K562 (cell line): ENCODE measurements at regions of chr14 and their contacts with region 1.

Region 1: DNA sequence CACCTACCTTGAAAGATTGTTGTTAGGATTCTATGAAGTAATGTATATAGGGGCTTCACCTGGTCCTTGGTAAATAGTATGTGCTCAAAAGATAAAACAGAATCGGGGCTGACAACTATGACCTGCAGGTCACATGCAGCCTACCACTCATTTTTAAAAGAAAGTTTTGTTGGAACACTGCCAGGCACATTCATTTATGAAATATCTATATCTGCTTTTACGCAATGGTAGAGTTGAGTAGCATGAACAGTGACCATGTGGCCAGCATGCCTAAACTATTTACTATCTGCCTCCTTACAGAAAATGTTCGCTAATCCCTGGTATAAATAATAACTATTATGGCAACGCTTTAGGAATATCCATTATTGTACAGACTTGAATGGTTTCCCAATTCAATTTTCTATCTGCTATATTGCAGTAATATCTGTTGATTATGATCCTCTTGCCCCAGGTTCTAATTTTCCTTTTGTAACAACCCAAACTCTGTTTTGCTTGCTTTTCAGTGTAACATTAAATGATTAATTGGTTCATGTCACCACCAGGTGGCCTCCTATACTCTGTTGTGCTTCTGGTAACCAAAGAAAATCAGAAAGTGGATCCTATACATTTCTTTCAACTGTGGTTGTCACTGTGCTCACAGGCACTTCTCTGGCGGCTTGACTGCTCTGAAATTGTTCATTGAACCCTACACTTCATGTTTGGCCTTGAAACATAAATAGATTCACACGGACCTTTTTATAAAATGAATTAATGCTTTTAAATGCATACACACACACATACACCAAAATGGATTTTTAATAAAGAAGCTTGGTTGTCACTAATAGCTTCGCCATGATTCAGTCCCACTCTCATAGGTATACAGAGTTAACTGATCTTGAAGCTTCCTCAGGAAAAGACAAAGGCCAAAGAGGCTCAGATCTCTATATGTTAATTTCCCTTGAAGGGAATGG is 227.7 kb upstream of the NPAS3 start:
- DNase-seq: peak; percentile 18 to 28 (median 19)
- ATAC-seq: 0 out of 3 replicates have a peak, but pooled peaks have one; percentile 43
- H3K4me3 ChIP-seq: no peak overlapping the region
- H3K27ac ChIP-seq: no peak overlapping the region
- H3K4me1 ChIP-seq: no peaks in the 10 kb centered on the region
- H3K27me3 ChIP-seq: no peaks in the 10 kb centered on the region; a peak in 1 of 5 replicates
- CTCF ChIP-seq: peak; percentile 14 to 54 (median 35); a peak in 3 of 6 replicates
- EP300 ChIP-seq: no peak
- POLR2A ChIP-seq: no peak
- RAD21 ChIP-seq: peak; percentile 29 to 64; a peak in 3 of 4 replicates

Region 2: DNA sequence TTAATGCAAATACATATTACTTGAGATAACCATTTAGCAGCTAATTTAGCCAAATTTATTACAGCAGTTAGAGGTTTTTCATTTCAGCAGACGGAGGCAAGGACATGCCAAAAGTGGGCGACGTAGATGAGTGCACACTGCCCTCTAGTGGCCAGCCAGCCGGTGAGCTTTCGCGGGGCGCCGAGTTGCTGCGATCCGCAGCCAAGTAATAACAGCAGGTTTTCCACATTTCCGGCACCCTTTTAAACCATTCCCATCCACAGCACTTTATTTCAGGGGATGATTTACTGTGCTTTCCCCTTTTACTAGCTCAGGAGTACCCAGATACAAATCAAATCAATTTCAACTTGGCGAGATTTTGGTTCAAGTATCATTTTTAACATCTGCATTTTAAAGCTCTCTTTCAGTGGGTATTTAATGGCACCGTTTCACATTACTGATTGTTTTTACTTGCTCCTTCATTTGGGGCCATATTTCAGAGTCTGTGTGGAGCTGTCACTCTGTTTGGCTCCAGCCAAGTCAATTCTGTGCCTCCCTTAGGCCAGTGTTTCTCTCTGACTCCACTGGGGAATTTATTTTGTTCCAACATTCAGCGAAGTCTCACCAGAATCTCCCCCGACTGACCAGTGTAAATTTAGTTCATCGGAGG is 1081.8 kb after region 1 on chr14:
- CTCF ChIA-PET with region 1: no interaction called
- POLR2A ChIA-PET with region 1: no interaction called
- in situ Hi-C with region 1: loop called (anchors 10 kb)
- intact Hi-C with region 1: no loop called
- DNase-seq: peak; percentile 69 to 77 (median 72)
- ATAC-seq: peak; percentile 93
- H3K4me3 ChIP-seq: no peak overlapping the region
- H3K27ac ChIP-seq: no peak overlapping the region
- H3K4me1 ChIP-seq: no peaks in the 10 kb centered on the region; a peak in 2 of 5 replicates
- H3K27me3 ChIP-seq: 0 out of 5 replicates have a peak, but pooled peaks cover 0 to 2% of the 10 kb centered on the region in 2 experiments
- CTCF ChIP-seq: peak; percentile 79 to 84 (median 79)
- EP300 ChIP-seq: no peak
- POLR2A ChIP-seq: no peak
- RAD21 ChIP-seq: peak; percentile 73 to 86

Region 3: DNA sequence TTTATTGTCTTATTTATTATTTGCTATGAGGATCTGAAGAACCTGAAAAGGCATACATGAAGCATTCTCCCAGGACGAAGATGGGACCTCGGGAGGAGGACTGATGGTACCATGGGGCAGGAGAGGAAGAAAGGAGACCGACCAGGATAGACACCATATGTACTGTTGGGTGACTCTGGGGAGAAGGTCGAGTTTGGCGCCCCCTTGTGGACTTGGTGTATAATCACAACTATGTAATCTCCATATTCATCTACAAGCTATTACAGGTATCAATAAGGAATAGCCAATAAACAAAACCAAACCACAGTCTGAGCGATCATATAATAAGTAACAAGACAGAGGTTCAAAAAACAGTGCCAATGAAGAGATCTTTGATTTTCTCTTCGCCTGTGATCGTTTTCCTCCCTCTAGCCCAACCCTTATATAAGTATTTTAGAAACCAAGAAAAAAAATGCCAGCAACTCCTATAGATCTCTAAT is 1612.0 kb after region 1 on chr14:
- CTCF ChIA-PET with region 1: interaction called, 8 read pairs
- POLR2A ChIA-PET with region 1: no interaction called
- in situ Hi-C with region 1: loop called (anchors 25 kb)
- intact Hi-C with region 1: no loop called
- DNase-seq: peak; percentile 46 to 76 (median 52)
- ATAC-seq: peak; percentile 88
- H3K4me3 ChIP-seq: no peak overlapping the region
- H3K27ac ChIP-seq: no peak overlapping the region
- H3K4me1 ChIP-seq: no peaks in the 10 kb centered on the region
- H3K27me3 ChIP-seq: no peaks in the 10 kb centered on the region
- CTCF ChIP-seq: peak; percentile 42 to 65 (median 61); a peak in 5 of 6 replicates
- EP300 ChIP-seq: no peak
- POLR2A ChIP-seq: no peak
- RAD21 ChIP-seq: peak; percentile 22 to 39; a peak in 2 of 4 replicates